Activated B cell treated with CpG ODN at 0.5 μM for 24 hours (primary cell): ENCODE measurements at regions of chr13 and their contacts with region 1.

Region 1: DNA sequence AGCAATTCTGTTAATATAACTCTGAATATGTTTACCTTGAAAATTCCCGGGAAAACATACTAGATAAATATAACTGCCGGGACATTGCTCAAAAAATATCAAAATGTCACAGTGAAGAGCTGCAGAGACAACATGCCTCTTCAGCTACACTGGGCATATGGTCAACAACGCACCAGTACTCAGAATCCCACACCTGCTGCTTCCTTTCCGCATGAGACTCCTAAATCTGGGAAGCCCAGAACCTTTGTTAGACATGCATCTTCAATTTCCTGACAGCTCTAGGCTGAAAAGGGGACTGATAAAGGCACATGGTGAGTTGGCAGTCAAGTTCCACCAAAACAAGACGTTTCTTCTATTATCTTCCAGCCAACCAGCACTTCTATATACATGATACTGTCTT is 53.7 kb downstream of the USP12 start:
- DNase-seq: no peak
- ATAC-seq: no peak
- H3K4me3 Mint-ChIP-seq: no peak overlapping the region
- H3K27ac Mint-ChIP-seq: no peak overlapping the region
- H3K4me1 Mint-ChIP-seq: peaks cover 77% of the 10 kb centered on the region
- H3K27me3 Mint-ChIP-seq: no peaks in the 10 kb centered on the region
- CTCF ChIP-seq: no peak

Region 2: DNA sequence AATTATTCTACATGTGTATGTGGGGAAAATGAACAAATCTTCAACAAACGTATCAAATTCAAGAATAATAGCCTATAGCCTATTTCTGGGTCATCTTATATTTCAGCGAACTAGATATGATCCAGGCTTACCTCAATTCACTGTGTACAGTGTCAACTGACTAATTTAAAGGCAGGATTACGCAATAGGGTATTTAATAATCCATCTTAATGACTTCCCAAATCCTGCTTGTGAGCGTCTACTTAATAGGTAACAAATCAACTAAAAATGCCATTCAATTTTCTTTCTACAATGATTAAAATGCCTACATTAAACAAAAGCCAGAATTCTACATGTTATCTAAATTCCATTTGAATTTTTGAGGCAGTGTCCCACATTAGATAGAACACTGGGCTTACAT is 13.3 kb before region 1 on chr13:
- CTCF ChIA-PET with region 1: no interaction called
- POLR2A ChIA-PET with region 1: no interaction called
- intact Hi-C with region 1: loop called (anchors 2 kb)
- DNase-seq: no peak
- ATAC-seq: no peak
- H3K4me3 Mint-ChIP-seq: no peak overlapping the region
- H3K27ac Mint-ChIP-seq: no peak overlapping the region
- H3K4me1 Mint-ChIP-seq: peaks cover 20% of the 10 kb centered on the region
- H3K27me3 Mint-ChIP-seq: no peaks in the 10 kb centered on the region
- CTCF ChIP-seq: no peak

Region 3: DNA sequence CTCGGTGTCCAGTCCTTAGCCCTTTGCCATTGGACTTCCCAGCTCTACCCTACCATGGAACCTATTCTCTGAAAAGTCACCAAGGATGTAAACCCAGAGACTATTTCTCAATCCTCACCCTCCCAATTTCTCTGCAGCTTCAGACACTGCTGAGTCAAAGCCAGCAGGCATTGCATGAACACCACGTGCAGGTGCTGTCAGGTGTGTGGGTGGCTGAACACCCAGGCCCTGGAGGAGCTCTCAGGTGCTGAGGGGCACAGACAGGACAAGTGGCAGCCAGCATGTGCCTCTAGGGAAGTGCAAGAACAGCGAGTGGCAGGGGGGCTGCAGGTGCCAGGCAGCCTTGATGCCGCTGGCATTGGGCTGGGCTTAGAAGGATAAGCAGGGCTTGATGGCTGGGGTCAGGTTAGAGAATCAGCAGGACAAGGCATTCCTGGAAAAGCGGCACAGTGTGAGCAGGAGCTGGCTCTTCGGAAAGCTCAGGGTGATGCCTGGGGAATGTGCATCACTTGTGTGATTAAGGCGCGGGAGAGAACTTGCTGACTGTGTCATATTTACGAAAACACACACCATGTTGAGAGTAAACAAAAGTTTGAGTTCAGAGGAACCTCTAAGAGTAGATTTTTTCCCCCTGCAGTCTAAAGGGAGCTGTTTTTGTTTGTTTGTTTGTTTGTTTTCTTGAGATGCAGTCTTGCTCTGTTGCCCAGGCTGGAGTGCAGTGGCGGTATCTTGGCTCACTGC is 418.6 kb after region 1 on chr13:
- CTCF ChIA-PET with region 1: no interaction called
- POLR2A ChIA-PET with region 1: no interaction called
- intact Hi-C with region 1: no loop called
- DNase-seq: no peak
- ATAC-seq: no peak
- H3K4me3 Mint-ChIP-seq: no peak overlapping the region
- H3K27ac Mint-ChIP-seq: no peak overlapping the region
- H3K4me1 Mint-ChIP-seq: peaks cover 11% of the 10 kb centered on the region
- H3K27me3 Mint-ChIP-seq: no peaks in the 10 kb centered on the region
- CTCF ChIP-seq: no peak